ENCODE measurements at regions of chr22 and their contacts with region 1.

Region 1: GRCh38 chr22:36901411-36902142 is 11.9 kb upstream of the CSF2RB start:
- DNase-seq: no peak
- ATAC-seq: no peak
- H3K4me3 ChIP-seq: no peak overlapping the region
- H3K27ac ChIP-seq: no peak overlapping the region
- H3K4me1 ChIP-seq: no peaks in the 10 kb centered on the region
- H3K27me3 ChIP-seq: no peaks in the 10 kb centered on the region
- CTCF ChIP-seq: no peak

Region 2: DNA sequence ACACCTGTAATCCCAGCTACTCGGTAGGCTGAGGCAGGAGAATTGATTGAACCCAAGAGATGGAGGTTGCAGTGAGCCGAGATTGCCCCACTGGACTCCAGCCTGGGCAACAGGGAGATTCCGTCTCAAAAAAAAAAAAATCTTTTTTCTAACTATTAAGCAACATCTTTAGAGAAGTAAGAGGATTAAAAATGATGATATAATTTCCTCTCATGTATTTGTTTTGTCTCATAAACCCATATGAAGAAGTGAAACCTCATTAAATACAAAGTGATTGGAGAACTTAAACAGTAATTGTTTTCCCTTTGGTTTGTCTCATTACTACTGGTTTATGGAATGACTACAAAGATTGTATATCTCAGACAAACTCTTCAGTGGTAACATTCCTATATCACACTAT is 1647.9 kb after region 1 on chr22:
- CTCF ChIA-PET with region 1: no interaction called
- POLR2A ChIA-PET with region 1: interaction called, 10 read pairs
- in situ Hi-C with region 1: no loop called
- intact Hi-C with region 1: no loop called
- DNase-seq: no peak
- ATAC-seq: no peak
- H3K4me3 ChIP-seq: no peak overlapping the region
- H3K27ac ChIP-seq: no peak overlapping the region
- H3K4me1 ChIP-seq: no peaks in the 10 kb centered on the region
- H3K27me3 ChIP-seq: no peaks in the 10 kb centered on the region
- CTCF ChIP-seq: no peak

Measured in Panc1 (cell line).